ENCODE measurements at regions of chr4 and their contacts with region 1.

Region 1: DNA sequence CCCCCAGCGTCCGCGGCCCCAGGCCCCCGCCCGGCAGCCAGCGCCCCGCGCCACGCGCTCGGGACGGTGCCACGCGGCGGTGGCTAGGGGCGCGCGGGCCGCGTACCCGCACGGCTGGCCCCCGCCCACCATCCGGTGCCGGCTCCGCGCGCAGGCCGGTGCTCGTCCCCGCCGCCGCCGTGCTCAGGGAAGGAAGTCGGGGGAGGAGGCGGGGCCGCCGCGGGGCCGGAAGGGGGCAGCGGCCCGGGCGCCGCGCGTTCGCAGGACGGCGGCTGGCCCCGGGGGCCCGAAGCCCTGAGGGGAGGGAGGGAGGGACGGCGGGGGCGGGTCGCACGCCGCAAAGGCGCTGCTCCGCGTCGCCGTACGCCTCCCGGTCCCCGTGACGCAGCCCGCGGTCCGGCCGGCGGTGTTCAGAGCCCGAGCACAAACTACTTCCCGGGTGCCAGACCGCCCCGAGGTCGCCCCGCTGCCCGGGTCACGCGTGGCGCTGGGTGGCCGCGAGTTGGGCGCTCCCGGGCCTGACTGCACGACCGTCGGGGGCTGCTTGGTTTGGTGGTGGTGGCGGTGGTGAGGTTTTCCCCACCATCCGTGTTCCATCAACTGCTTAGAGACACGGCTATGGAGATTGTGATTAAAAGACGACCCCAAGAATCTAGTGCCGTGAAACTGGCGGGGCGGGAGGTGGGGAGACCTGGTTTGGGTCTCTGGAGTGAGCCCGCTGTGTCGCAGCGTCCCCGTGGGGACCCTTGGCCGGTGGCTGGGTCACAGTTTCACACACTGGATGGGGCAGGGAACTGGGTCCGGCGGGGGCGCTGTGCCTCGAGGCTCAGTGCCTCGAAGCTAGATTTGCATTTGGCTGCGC is at the start of gene DCTD:
- DNase-seq: peak; percentile 85
- H3K4me3 Mint-ChIP-seq: peak within 1 kb of the TSS; percentile 83
- H3K27ac Mint-ChIP-seq: peak within 1 kb of the TSS; percentile 93
- H3K4me1 Mint-ChIP-seq: peaks cover 51% of the 10 kb centered on the region
- H3K27me3 Mint-ChIP-seq: no peaks in the 10 kb centered on the region
- total RNA-seq, gene DCTD: 115 to 117 TPM

Region 2: GRCh38 chr4:182806259-182807252 is 110.9 kb before region 1 on chr4:
- CTCF ChIA-PET with region 1: no interaction called
- POLR2A ChIA-PET with region 1: no interaction called
- intact Hi-C with region 1: loop called (anchors 2 kb)
- DNase-seq: peak; percentile 77
- H3K4me3 Mint-ChIP-seq: peak overlapping the region; percentile 72
- H3K27ac Mint-ChIP-seq: no peak overlapping the region
- H3K4me1 Mint-ChIP-seq: peaks cover 5% of the 10 kb centered on the region
- H3K27me3 Mint-ChIP-seq: peaks cover 4% of the 10 kb centered on the region

Region 3: GRCh38 chr4:183182873-183183725 is 265.7 kb after region 1 on chr4:
- CTCF ChIA-PET with region 1: no interaction called
- POLR2A ChIA-PET with region 1: interaction called, 3 read pairs
- intact Hi-C with region 1: loop called (anchors 5 kb)
- DNase-seq: peak; percentile 74
- H3K4me3 Mint-ChIP-seq: no peak overlapping the region
- H3K27ac Mint-ChIP-seq: no peak overlapping the region
- H3K4me1 Mint-ChIP-seq: peaks cover 22% of the 10 kb centered on the region
- H3K27me3 Mint-ChIP-seq: peaks cover 29% of the 10 kb centered on the region

Region 4: DNA sequence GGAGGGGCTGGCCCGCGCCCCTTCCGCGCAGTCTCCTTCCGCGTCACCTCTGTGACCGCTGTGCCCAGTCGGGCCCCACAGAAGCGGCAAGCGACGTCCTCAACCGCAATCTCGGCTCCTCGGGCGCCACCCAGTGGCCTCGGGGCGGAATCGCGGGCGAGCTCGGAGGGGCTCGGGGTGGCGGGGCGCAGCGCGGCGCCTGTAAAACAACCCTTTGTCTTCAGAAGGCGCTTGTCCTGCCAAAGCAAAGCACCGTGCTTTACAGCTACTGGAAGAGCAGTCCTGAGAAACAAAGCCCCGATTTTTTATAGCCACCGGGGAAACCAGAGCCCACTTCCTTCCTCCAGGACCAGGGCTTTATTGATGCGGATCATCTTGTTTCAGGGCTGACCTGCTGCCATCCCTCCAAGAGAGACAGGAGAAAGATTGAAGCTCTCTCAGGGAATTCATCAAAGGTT is 489.7 kb after region 1 on chr4:
- CTCF ChIA-PET with region 1: interaction called, 3 read pairs
- POLR2A ChIA-PET with region 1: no interaction called
- intact Hi-C with region 1: loop called (anchors 5 kb)
- DNase-seq: peak; percentile 94
- H3K4me3 Mint-ChIP-seq: peak overlapping the region; percentile 66
- H3K27ac Mint-ChIP-seq: peak overlapping the region; percentile 59
- H3K4me1 Mint-ChIP-seq: peaks cover 13% of the 10 kb centered on the region
- H3K27me3 Mint-ChIP-seq: no peaks in the 10 kb centered on the region

Region 5: DNA sequence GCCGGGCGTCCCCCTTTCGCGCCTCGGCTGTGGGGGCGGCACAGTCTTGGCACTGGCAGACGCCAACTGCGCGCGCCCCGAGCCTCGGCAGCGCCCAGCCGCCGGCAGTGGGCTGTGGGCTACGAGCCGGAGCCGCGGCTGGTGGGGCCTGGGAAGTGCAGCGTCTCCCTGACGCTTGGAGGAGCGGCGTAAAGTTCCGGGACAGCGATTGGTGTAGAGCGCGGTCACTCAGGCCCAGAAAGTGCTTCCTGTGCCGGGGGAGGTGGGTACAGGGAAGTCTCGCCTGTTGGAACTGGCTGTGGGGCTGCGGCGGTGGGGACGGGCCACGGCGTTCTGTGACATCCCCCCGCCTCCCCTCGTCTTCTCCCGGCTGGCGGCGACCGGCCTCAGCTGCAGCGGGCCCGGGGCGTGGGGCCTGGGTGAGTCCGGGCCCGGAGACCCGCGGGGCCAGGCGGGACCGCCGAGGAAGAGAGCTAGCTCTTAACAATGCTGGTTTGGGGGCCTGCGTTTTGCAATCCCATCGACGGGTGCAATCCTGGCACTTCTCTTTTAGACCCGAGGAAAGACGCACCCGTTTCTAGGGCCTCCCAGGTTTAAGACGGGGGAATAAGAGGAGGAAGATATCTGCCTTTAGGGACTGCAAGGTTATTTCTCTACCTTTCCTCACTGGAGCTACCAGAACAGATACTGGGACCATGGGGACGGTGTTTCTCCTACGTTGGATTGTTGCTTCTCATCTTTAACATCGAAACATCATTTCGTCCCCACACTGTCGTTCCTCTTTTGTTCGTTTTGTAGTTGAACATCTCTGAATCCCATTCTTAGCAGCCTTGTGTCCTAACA is 741.8 kb after region 1 on chr4 and contains the starts of genes RWDD4 and TRAPPC11:
- CTCF ChIA-PET with region 1: no interaction called
- POLR2A ChIA-PET with region 1: no interaction called
- intact Hi-C with region 1: loop called (anchors 1 kb)
- DNase-seq: peak; percentile 98
- H3K4me3 Mint-ChIP-seq: peak within 1 kb of the TSS; percentile 85
- H3K27ac Mint-ChIP-seq: peak within 1 kb of the TSS; percentile 80
- H3K4me1 Mint-ChIP-seq: peaks cover 35% of the 10 kb centered on the region
- H3K27me3 Mint-ChIP-seq: no peaks in the 10 kb centered on the region
- total RNA-seq, gene RWDD4: 19.4 to 19.8 TPM
- total RNA-seq, gene TRAPPC11: 29.7 to 30.2 TPM

Measured in activated CD4-positive, alpha-beta memory T cell treated with anti-CD3 and anti-CD28 coated beads for 36 hours (primary cell).